ENCODE measurements at regions of chr1 and their contacts with region 1.

Region 1: GRCh38 chr1:224851210-224851847 is 78.1 kb upstream of the DNAH14 start:
- H3K4me3 ChIP-seq: no peak overlapping the region
- H3K27ac ChIP-seq: no peak overlapping the region
- H3K4me1 ChIP-seq: no peaks in the 10 kb centered on the region
- CTCF ChIP-seq: peak; percentile 83

Region 2: DNA sequence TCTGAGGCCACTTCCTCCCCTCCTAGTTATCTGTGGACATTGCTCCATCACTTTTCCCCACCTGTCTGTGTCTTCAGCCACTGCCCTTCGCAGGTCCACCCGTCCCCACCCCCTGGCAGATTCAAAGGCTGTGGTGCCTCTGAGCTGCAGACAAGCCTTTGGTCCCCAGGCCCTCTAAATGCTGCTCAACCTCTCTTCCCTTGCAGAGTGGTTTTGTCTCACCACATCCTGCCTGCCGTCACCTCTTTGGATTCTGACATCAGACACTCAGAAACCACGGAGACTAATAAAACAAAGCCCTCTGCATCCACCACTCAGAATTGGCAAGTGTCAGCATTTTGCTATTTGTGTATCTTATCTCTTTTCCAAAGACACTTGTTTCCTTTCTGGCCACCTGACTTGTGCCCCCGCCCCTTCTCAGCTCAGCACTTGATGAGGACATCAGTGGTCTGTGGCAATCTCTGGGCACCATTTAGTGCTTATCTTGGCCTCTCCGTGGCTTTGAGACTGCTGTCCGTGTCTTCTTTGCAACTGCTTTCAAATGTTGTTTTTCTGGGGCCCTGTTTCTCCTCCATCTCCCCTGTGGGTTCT is 227.5 kb before region 1 on chr1:
- CTCF ChIA-PET with region 1: interaction called, 14 read pairs
- POLR2A ChIA-PET with region 1: interaction called, 4 read pairs
- H3K4me3 ChIP-seq: no peak overlapping the region
- H3K27ac ChIP-seq: peak overlapping the region; percentile 35
- H3K4me1 ChIP-seq: peaks cover 30% of the 10 kb centered on the region
- CTCF ChIP-seq: no peak

Region 3: DNA sequence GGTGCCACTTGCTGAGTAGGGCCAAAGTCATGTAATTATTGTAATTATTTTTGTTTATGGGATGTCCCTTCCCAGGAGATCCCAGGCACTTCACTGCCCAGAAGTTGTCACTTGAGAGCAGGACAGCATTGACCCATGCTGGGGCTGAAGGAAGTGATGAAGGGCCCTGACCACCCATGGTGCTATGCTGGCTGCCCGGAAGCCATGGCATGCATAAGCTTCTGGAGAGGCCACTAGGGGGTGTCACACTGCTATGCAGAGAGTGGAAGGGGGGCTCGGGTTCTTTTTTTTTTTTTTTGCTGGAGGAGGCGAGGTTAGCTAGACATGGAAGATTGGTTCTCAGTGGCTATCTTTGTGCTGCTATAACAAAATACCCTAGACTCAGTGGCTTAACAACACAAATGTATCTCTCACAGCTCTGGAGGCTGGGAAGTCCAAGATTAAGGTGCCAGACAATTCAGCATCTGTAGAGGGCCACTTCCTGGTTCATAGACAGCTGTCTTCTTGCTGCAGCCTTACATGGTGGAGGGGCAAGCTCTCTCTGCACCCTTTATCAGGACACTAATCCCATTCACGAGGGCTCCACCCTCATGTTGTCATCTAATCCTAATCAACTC is 150.3 kb before region 1 on chr1:
- CTCF ChIA-PET with region 1: interaction called, 129 read pairs
- POLR2A ChIA-PET with region 1: no interaction called
- H3K4me3 ChIP-seq: no peak overlapping the region
- H3K27ac ChIP-seq: no peak overlapping the region
- H3K4me1 ChIP-seq: no peaks in the 10 kb centered on the region
- CTCF ChIP-seq: peak; percentile 56

Region 4: DNA sequence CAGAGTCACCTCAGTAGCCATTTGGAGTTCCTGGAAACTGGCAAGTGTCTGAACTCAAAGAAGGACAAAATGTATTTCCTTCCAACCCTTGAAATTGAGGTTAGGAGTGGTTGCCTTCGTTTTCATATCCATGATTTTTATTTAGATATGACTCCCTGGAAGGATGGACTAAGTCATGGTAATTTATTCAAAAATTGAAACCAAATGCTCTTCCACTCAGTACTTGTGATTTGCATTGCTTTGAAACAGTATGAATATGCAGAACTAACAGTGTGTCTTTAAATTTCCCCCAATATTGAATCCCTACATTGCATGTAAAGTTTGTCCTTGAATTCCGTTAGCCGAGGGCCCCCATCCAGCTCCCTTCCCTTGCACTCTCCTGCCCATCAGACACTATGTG is 33.9 kb before region 1 on chr1:
- CTCF ChIA-PET with region 1: interaction called, 27 read pairs
- POLR2A ChIA-PET with region 1: no interaction called
- H3K4me3 ChIP-seq: no peak overlapping the region
- H3K27ac ChIP-seq: no peak overlapping the region
- H3K4me1 ChIP-seq: no peaks in the 10 kb centered on the region
- CTCF ChIP-seq: no peak

Region 5: DNA sequence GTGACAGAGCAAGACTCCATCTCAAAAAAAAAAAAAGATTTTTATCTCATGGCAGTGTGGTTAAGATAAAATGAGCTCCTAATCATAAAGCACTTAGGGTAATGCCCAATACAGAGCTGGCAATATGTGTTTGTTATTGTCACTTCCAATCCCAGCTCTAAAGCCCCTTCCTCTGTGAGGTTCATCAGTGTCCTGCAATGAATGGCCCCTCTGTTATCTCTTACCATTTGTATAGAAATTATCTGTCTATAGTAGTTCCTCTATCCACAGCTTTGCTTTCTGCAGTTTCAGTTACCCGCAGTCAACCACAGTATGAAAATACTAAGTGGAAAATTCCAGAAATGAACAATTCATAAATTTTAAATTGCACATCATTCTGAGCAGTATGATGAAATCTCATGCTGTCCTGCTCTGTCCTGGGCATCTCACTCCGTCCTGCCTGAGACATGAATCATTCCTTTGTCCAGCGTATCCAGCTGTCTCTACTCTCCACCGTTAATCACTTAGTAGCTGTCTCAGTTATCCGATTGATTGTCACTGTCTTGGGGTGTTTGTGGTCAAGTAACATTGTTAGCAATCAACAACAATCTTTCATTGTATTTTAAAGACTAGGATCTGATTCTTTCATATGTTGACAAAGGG is 28.0 kb after region 1 on chr1:
- CTCF ChIA-PET with region 1: interaction called, 53 read pairs
- POLR2A ChIA-PET with region 1: no interaction called
- H3K4me3 ChIP-seq: no peak overlapping the region
- H3K27ac ChIP-seq: no peak overlapping the region
- H3K4me1 ChIP-seq: peaks cover 60% of the 10 kb centered on the region
- CTCF ChIP-seq: no peak

Region 6: DNA sequence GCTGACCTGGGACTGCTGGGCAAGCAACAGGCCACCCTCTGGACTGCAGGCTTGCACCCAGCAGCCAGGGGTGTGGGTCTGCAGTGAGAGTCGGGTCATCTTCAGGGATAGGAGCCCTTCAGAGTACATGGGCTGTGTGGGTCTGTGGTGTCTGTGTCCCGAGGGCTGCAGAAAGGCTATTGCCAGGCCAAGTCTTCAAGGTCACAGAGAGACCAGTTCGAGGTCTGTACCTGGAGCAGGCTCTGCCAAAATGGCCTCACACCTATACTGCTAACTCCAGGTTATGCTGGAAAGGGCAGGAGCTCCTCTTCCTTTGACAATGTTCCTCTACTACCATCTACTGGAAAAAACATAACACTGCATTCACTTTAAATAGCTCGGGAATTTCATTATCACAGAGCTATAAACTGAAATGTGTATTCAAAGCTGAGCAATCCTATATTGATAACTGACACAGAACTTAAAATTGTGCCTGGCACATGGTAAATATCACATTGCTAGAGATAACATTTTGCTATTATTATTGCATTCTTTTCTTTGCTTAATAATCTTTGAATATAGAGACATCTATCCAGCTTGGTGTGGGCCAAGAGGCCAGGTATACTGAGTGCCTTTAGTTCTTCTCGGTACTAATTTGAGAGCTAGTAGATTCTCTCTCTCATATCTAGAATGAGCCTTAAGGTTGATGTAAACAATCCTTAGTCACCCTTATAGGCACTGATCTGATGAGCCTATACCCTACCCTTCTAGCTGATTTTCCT is 71.3 kb after region 1 on chr1:
- CTCF ChIA-PET with region 1: interaction called, 71 read pairs
- POLR2A ChIA-PET with region 1: no interaction called
- H3K4me3 ChIP-seq: no peak overlapping the region
- H3K27ac ChIP-seq: no peak overlapping the region
- H3K4me1 ChIP-seq: no peaks in the 10 kb centered on the region
- CTCF ChIP-seq: peak; percentile 87

Region 7: GRCh38 chr1:225508538-225509375 is 657.4 kb after region 1 on chr1:
- CTCF ChIA-PET with region 1: no interaction called
- POLR2A ChIA-PET with region 1: no interaction called
- H3K4me3 ChIP-seq: no peak overlapping the region; the same call in 1 of the 2 replicates
- H3K27ac ChIP-seq: peak overlapping the region; percentile 53
- H3K4me1 ChIP-seq: peaks cover 36% of the 10 kb centered on the region
- CTCF ChIP-seq: no peak

Measured in HEK293 (cell line).